Lower leg skin (tissue), 4 donors: ENCODE measurements at regions of chr5 and their contacts with region 1.

Region 1: GRCh38 chr5:103145196-103145595 is 25.1 kb downstream of the PPIP5K2 start:
- DNase-seq: no peak
- H3K4me3 ChIP-seq: no peak overlapping the region
- CTCF ChIP-seq: no peak
- POLR2A ChIP-seq: no peak

Region 2: GRCh38 chr5:102782311-102782770 is 362.9 kb before region 1 on chr5:
- intact Hi-C with region 1: loop called (anchors 10 kb)
- DNase-seq: no peak
- H3K4me3 ChIP-seq: no peak overlapping the region
- CTCF ChIP-seq: no peak
- POLR2A ChIP-seq: no peak

Region 3: GRCh38 chr5:103098993-103099392 is 46.2 kb before region 1 on chr5:
- intact Hi-C with region 1: no loop called
- DNase-seq: no peak
- H3K4me3 ChIP-seq: no peak overlapping the region
- CTCF ChIP-seq: no peak
- POLR2A ChIP-seq: no peak

Region 4: GRCh38 chr5:103119765-103120606 is 25.2 kb before region 1 on chr5 and contains the starts of genes GIN1 and PPIP5K2:
- intact Hi-C with region 1: no loop called
- DNase-seq: peak; percentile 98 to 99
- H3K4me3 ChIP-seq: peak within 1 kb of the TSS; percentile 69
- CTCF ChIP-seq: no peak
- POLR2A ChIP-seq: no peak
- total RNA-seq, gene GIN1: 1.3 to 5.0 (median 4.1) TPM
- total RNA-seq, gene PPIP5K2: 14.2 to 36.7 (median 20.1) TPM